ENCODE measurements at regions of chr17 and their contacts with region 1.

Region 1: DNA sequence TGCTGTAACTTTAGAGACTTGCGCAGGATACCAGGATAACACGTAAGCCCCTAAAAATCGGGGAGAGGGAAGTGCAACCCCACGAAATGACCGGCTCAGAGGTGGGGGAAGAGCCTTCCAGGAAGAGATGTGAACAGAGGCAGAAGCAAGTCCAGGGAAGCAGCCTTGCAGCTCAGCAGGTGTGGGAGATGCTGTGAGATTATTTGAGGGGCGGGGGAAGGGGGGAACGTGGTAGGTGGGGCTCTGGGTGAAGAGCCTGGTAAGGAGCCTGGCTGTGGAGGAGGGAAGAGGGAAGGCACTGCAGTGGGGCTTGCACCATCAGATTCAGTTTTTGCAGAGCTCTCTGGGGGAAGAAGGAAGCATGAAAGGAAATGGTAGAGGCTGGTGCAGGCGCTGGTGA is 95.4 kb upstream of the CACNG5 start:
- DNase-seq: no peak
- H3K4me3 ChIP-seq: no peak overlapping the region
- H3K27me3 ChIP-seq: no peaks in the 10 kb centered on the region
- CTCF ChIP-seq: no peak

Region 2: GRCh38 chr17:66727639-66728570 is 11.6 kb before region 1 on chr17:
- CTCF ChIA-PET with region 1: interaction called, 11 read pairs
- POLR2A ChIA-PET with region 1: no interaction called
- DNase-seq: no peak
- H3K4me3 ChIP-seq: no peak overlapping the region
- H3K27me3 ChIP-seq: no peaks in the 10 kb centered on the region
- CTCF ChIP-seq: peak; percentile 68

Region 3: GRCh38 chr17:66762276-66762675 is 22.7 kb after region 1 on chr17:
- CTCF ChIA-PET with region 1: no interaction called
- POLR2A ChIA-PET with region 1: no interaction called
- DNase-seq: no peak
- H3K4me3 ChIP-seq: no peak overlapping the region
- H3K27me3 ChIP-seq: no peaks in the 10 kb centered on the region
- CTCF ChIP-seq: no peak

Region 4: GRCh38 chr17:66873962-66874361 is 134.4 kb after region 1 on chr17:
- CTCF ChIA-PET with region 1: no interaction called
- POLR2A ChIA-PET with region 1: no interaction called
- DNase-seq: no peak
- H3K4me3 ChIP-seq: no peak overlapping the region
- H3K27me3 ChIP-seq: no peaks in the 10 kb centered on the region
- CTCF ChIP-seq: no peak

Measured in BJ (cell line).